GM12878 (cell line): ENCODE measurements at regions of chr15 and their contacts with region 1.

Region 1: DNA sequence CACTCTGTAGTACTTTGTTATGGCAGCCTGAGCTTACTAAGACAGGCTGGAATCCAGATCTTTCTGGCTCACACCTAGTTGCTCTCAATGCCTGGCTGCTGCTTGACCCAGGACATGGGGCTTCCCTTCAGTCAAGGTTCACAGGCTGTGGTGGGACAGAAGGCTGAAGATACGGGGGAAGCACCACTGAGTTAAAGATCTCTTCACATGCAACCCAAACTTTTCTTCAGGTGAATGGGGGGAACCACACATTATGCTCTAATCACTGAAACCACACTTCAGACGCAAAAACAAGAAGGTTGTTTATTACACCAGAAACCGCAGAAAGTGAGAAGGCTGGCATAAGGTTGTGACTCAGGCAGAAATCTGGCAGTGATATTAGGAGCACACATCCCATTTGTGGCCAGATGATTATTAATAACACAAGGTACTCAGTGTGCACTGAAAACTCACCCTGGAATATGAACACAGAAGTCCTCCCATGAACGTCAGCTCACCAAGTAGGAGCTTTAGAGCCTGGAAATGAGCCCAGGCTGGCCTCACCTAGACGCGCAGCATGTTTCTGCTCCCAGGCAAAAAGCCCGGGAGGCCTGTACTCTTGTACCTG is 230.5 kb upstream of the CHRNA7 start:
- DNase-seq: peak; percentile 77
- ATAC-seq: peak; percentile 95
- H3K4me3 ChIP-seq: no peak overlapping the region
- H3K27ac ChIP-seq: no peak overlapping the region; the same call in 1 of the 2 replicates
- H3K4me1 ChIP-seq: peaks cover 15% of the 10 kb centered on the region
- H3K27me3 ChIP-seq: no peaks in the 10 kb centered on the region
- CTCF ChIP-seq: no peak
- EP300 ChIP-seq: peak; percentile 81 to 82
- POLR2A ChIP-seq: no peak
- RAD21 ChIP-seq: 0 out of 2 replicates have a peak, but pooled peaks have one; percentile 8

Region 2: DNA sequence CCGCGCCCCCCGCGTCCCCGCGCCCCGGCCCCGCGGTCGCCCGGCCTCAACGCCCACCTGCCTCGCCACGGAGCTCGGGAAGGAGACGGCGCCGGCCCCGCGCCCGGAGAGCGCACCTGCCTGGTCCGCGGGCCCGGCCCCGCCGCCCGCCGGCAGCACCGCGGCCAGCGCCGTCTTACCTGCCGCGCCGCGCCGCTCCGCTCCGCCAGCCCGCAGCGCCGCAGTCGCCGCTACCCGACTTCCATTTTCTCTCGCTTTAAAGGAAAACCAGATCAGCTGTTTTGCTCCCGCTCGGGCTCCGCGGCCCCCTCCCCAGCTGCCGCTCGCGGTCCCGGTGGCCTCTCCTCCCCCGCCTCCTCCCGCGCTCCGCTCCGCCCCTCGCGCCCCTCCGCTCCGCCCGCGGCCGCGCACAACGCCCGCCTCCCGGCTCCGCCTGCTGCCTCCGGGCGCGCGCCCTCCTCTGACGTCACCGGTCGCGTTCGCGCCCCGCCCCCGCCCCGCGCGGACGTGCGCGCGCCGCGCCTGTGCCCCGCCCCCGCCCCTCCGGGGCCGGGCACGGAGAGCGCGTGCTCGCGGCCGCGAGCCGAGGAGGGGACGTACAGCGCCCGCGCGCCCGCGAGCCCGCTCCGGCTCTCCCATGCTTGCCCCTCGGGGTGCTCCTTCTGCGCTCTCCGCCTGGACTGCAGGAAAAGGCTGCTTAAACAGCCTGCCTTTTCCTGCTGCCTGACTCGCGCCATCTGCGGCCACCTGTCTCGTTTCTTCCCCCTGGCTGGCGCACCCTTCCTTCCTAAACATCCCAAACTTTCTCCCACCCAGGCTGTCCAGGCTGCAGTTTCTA is 70.7 kb after region 1 on chr15:
- CTCF ChIA-PET with region 1: no interaction called
- POLR2A ChIA-PET with region 1: no interaction called
- RAD21 ChIA-PET with region 1: no interaction called
- SMC1A ChIA-PET with region 1: no interaction called
- in situ Hi-C with region 1: no loop called
- intact Hi-C with region 1: loop called (anchors 5 kb)
- DNase-seq: no peak
- ATAC-seq: peak; percentile 89
- H3K4me3 ChIP-seq: peak within 1 kb of the TSS; percentile 76
- H3K27ac ChIP-seq: no peak within 1 kb of the TSS
- H3K4me1 ChIP-seq: no peaks in the 10 kb centered on the region
- H3K27me3 ChIP-seq: peaks cover 0 to 6% of the 10 kb centered on the region in 2 experiments; a peak in 2 of 4 replicates
- CTCF ChIP-seq: no peak
- EP300 ChIP-seq: no peak
- POLR2A ChIP-seq: peak; percentile 40; the same call in 1 of the 2 replicates
- RAD21 ChIP-seq: no peak